Panc1 (cell line): ENCODE measurements at regions of chr10 and their contacts with region 1.

Region 1: DNA sequence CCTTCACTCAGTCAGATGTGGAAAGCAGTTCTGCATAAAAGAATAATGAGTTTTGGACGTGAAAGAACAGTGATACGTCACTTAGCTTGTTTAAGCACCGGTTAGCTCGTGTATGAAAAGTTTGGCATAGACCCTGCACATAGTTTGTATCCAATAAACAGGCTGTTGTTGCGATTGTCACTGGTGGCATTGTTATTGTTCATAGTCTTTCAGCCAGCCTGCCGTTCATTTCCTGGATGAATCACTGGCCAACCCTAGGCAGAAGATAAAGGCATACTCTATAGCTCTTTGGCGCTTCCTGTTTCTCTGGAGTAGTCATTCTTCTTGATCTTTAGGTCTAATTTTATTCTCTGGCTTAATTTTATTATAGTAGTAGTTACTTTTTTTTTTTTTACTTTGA is 57.8 kb upstream of the ANKRD30A start:
- DNase-seq: no peak
- ATAC-seq: no peak
- H3K4me3 ChIP-seq: no peak overlapping the region
- H3K27ac ChIP-seq: no peak overlapping the region
- H3K4me1 ChIP-seq: no peaks in the 10 kb centered on the region
- H3K27me3 ChIP-seq: no peaks in the 10 kb centered on the region
- CTCF ChIP-seq: no peak

Region 2: DNA sequence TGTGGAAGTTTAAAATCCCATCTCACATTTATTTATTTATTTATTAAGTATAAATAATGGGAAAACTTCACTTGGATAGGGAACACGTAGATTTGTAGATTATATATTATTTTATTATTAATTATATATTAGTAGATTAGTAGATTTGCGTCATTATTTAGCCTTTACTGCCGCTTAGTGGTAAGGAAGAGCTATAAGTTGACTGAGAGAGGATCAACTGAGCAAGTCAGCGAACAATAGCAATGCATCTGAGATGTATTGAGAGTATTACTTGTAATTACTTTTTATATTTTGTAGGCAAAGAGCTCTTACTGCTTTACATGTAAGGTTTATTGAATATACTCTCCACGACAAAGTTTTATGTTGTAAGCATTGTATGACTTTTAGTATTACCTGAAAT is 186.7 kb before region 1 on chr10:
- CTCF ChIA-PET with region 1: no interaction called
- POLR2A ChIA-PET with region 1: no interaction called
- in situ Hi-C with region 1: no loop called
- intact Hi-C with region 1: no loop called
- DNase-seq: no peak
- ATAC-seq: no peak
- H3K4me3 ChIP-seq: no peak overlapping the region
- H3K27ac ChIP-seq: no peak overlapping the region
- H3K4me1 ChIP-seq: no peaks in the 10 kb centered on the region
- H3K27me3 ChIP-seq: peaks cover 3% of the 10 kb centered on the region; the same call in 1 of the 2 replicates
- CTCF ChIP-seq: peak; percentile 48; the same call in 1 of the 2 replicates

Region 3: GRCh38 chr10:36942616-36943015 is 125.0 kb before region 1 on chr10:
- CTCF ChIA-PET with region 1: no interaction called
- POLR2A ChIA-PET with region 1: interaction called, 14 read pairs
- in situ Hi-C with region 1: no loop called
- intact Hi-C with region 1: no loop called
- DNase-seq: no peak
- ATAC-seq: no peak
- H3K4me3 ChIP-seq: no peak overlapping the region
- H3K27ac ChIP-seq: no peak overlapping the region
- H3K4me1 ChIP-seq: no peaks in the 10 kb centered on the region
- H3K27me3 ChIP-seq: no peaks in the 10 kb centered on the region
- CTCF ChIP-seq: no peak